AG04449 (cell line): ENCODE measurements at regions of chrX and their contacts with region 1.

Region 1: DNA sequence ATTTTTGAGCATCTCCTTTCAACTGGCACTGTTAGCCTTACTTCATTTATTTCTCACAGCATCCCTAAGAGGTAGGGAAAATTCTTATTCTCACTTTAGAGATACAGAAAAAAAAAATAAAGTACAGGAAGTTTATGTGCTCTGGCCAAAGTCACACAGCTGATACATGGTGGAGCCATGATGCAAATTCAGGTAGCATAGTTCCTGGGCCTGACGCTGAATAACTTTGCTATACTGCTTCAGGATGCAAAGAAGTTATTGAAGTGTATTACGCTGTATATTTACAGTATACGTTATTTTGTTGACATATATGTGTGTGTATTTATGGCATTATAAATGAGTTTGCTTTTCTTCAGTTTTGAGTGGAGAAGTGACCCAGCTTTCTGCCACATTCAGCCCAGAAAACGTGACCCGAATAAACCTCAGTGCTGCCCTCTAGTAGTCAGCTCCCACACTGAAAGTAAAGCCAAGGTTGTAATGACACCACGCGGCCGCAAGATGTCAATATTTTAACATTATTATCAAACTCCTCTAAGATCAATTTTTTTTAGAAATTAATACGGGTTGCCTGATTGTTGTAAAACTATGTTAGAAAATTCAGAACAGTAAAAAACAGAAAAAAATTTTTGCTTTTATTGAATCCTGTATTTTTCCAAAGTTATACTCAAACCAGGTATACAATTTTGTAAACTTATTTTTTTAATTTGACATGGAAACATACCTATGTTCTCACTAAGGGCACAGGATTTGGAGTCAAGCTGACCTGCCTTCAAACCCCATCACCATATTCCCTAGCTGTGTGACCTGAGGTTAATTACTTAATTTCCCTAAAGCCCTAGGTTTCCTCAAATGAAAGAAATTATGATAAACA is 3.8 kb upstream of the GUCY2F start:
- DNase-seq: no peak
- H3K4me3 ChIP-seq: no peak overlapping the region
- CTCF ChIP-seq: peak; percentile 75

Region 2: GRCh38 chrX:108699368-108699767 is 786.3 kb before region 1 on chrX:
- CTCF ChIA-PET with region 1: interaction called, 13 read pairs
- POLR2A ChIA-PET with region 1: interaction called, 3 read pairs
- DNase-seq: no peak
- H3K4me3 ChIP-seq: no peak overlapping the region
- CTCF ChIP-seq: peak; percentile 22

Region 3: GRCh38 chrX:109475174-109475891 is 10.4 kb before region 1 on chrX:
- CTCF ChIA-PET with region 1: interaction called, 61 read pairs
- POLR2A ChIA-PET with region 1: no interaction called
- DNase-seq: no peak
- H3K4me3 ChIP-seq: no peak overlapping the region
- CTCF ChIP-seq: peak; percentile 47

Region 4: DNA sequence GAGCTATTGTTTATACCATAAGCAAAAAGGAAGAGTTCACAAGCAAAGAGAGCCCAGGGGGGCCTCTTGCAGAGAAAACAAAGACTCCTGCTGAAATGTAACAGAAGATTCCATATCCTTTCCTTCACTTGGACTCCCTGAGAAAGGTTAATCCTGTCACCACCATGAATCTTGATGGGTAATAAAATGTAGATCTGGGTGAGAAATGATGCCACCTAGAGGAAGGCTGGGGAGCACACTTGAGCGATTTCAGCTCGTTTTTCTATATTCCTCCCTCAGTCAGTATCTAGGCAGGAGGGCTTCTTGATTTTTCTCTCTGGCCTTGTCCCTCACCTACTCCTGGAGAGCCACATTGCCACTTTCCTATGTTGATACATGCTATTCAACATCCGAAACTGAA is 149.5 kb after region 1 on chrX:
- CTCF ChIA-PET with region 1: interaction called, 57 read pairs
- POLR2A ChIA-PET with region 1: no interaction called
- DNase-seq: no peak
- H3K4me3 ChIP-seq: no peak overlapping the region
- CTCF ChIP-seq: peak; percentile 33

Region 5: GRCh38 chrX:109880629-109881028 is 394.9 kb after region 1 on chrX:
- CTCF ChIA-PET with region 1: interaction called, 13 read pairs
- POLR2A ChIA-PET with region 1: no interaction called
- DNase-seq: no peak
- H3K4me3 ChIP-seq: no peak overlapping the region
- CTCF ChIP-seq: no peak